ENCODE measurements at regions of chr12 and their contacts with region 1.

Region 1: GRCh38 chr12:49366652-49367380 is 446 bp upstream of the SPATS2 start:
- DNase-seq: peak; percentile 84 to 91 (median 86)
- ATAC-seq: peak; percentile 89
- H3K4me3 ChIP-seq: peak overlapping the region; percentile 15 to 83
- H3K27ac ChIP-seq: peak overlapping the region; percentile 80 to 96 (median 88)
- H3K4me1 ChIP-seq: peaks cover 28% of the 10 kb centered on the region
- H3K27me3 ChIP-seq: no peaks in the 10 kb centered on the region
- CTCF ChIP-seq: peak in 6 of 7 experiments; percentile 23 to 51 (median 42)
- POLR2A ChIP-seq: peak; percentile 18 to 79 (median 66)

Region 2: GRCh38 chr12:49288412-49288853 is 78.4 kb before region 1 on chr12:
- intact Hi-C with region 1: no loop called
- DNase-seq: peak; percentile 52 to 70 (median 61)
- ATAC-seq: peak; percentile 68
- H3K4me3 ChIP-seq: no peak overlapping the region
- H3K27ac ChIP-seq: no peak overlapping the region
- H3K4me1 ChIP-seq: no peaks in the 10 kb centered on the region
- H3K27me3 ChIP-seq: no peaks in the 10 kb centered on the region
- CTCF ChIP-seq: peak; percentile 69 to 83 (median 76)
- POLR2A ChIP-seq: no peak

Region 3: DNA sequence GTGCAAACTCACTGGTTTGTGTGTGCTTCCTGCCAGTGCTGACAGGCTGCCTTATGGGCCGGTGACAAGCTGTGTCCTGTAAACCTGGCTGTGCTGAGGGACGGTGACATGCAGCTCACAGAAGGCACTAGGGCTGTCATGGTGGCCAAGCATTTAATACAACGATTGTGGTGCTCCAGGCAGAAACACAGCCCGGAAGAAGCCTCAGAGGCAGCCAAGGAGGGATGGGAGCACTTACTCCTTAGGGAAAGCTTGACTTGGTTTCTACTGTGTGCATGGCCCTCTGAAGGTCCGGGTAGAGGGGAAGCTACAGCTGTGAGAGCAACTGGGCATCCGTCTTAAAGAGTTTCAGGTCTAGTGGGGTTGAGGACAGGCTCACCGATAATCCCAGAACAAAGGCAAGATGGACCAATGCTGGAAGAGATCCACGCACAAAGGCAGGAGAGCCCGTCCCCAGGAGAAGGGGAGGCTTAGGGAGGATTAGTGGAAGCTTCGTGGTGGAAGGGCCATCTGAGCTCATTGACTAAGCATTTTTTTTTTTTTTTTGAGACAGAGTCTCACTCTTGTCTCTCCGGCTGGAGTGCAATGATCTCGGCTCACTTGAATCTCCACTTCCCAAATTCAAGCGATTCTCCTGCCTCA is 211.8 kb after region 1 on chr12:
- intact Hi-C with region 1: loop called (anchors 10 kb)
- DNase-seq: no peak
- ATAC-seq: no peak
- H3K4me3 ChIP-seq: no peak overlapping the region
- H3K27ac ChIP-seq: no peak overlapping the region
- H3K4me1 ChIP-seq: peaks cover 11% of the 10 kb centered on the region
- H3K27me3 ChIP-seq: no peaks in the 10 kb centered on the region
- CTCF ChIP-seq: no peak
- POLR2A ChIP-seq: no peak

Measured in body of pancreas (tissue), 4 donors.